Activated T-helper 1 cell treated with anti-CD3 and anti-CD28 coated beads, Interleukin-12 subunit alpha, Interleukin-12 subunit beta, Interleukin-2, Interleukin-4 antibody, amounts not matched to agents 30 ng/mL and 10 ng/mL and 1 ng/mL, durations not matched to agents 14 hours and 24 hours and 36 hours (primary cell): ENCODE measurements at regions of chr2 and their contacts with region 1.

Region 1: GRCh38 chr2:68031542-68032160 is 31.2 kb downstream of the C1D start:
- DNase-seq: no peak
- H3K4me3 Mint-ChIP-seq: no peak overlapping the region
- H3K27ac Mint-ChIP-seq: no peak overlapping the region
- H3K4me1 Mint-ChIP-seq: no peaks in the 10 kb centered on the region
- H3K27me3 Mint-ChIP-seq: peaks cover 9% of the 10 kb centered on the region

Region 2: GRCh38 chr2:67846370-67847070 is 185.1 kb before region 1 on chr2:
- intact Hi-C with region 1: loop called (anchors 1 kb)
- DNase-seq: peak; percentile 2
- H3K4me3 Mint-ChIP-seq: no peak overlapping the region
- H3K27ac Mint-ChIP-seq: no peak overlapping the region
- H3K4me1 Mint-ChIP-seq: no peaks in the 10 kb centered on the region
- H3K27me3 Mint-ChIP-seq: peaks cover 5% of the 10 kb centered on the region

Region 3: DNA sequence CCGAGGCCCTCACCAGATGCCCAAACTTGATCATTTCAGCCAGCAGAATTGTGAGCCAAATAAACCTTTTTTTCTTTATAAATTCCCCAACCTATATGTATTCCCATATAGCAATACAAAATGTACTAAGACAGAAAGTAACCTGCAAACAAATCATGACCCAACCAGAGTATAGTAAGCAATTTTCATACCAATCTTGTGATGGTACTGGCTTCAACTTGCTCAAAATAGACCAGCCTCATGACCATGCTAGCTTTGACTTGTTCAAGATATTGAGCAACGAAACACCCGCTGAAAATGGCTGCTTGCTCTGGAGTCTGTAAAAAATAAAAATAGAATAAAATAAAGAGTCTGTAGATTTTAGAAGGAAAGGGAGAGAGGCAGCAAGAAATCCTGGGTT is 66.4 kb before region 1 on chr2:
- intact Hi-C with region 1: no loop called
- DNase-seq: no peak
- H3K4me3 Mint-ChIP-seq: no peak overlapping the region
- H3K27ac Mint-ChIP-seq: no peak overlapping the region
- H3K4me1 Mint-ChIP-seq: no peaks in the 10 kb centered on the region
- H3K27me3 Mint-ChIP-seq: peaks cover 3% of the 10 kb centered on the region